Sigmoid colon (tissue), 7 donors: ENCODE measurements at regions of chr14 and their contacts with region 1.

Region 1: GRCh38 chr14:31357279-31357678 is 63.1 kb downstream of the HEATR5A start:
- DNase-seq: no peak
- H3K4me3 ChIP-seq: no peak overlapping the region
- H3K27ac ChIP-seq: no peak overlapping the region
- H3K4me1 ChIP-seq: peaks cover 0 to 6% (median 2%) of the 10 kb centered on the region in 4 donors
- H3K27me3 ChIP-seq: no peaks in the 10 kb centered on the region
- CTCF ChIP-seq: no peak
- EP300 ChIP-seq: no peak
- POLR2A ChIP-seq: no peak

Region 2: GRCh38 chr14:31127690-31128089 is 229.6 kb before region 1 on chr14:
- intact Hi-C with region 1: loop called (anchors 10 kb)
- DNase-seq: no peak
- H3K4me3 ChIP-seq: no peak overlapping the region
- H3K27ac ChIP-seq: no peak overlapping the region
- H3K4me1 ChIP-seq: no peaks in the 10 kb centered on the region
- H3K27me3 ChIP-seq: no peaks in the 10 kb centered on the region
- CTCF ChIP-seq: no peak
- EP300 ChIP-seq: no peak
- POLR2A ChIP-seq: no peak

Region 3: DNA sequence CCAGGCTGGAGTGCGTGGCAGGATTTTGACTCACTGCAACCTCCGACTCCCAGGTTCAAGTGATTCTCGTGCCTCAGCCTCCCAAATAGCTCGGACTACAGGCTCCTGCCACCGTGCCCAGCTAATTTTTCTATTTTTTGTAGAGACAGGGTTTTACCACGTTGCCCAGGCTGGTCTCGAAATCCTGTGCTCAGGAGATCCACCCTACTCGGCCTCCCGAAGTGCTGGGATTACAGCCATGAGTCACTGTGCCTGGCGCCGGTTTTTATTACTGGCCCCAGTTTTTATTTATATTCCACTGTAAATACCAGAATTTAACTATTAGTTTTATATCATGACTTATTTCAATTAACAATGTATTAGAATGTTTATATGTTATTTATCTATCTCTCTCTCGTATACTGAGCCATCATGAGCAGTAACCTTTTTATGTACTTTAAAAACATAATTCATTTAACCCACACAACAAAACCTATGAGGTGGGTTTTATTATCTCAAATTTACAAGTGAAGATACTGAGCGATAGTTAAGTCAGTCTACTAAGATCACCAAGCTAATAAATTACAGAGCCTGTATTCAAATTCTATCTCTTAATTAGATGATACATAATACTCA is 197.5 kb before region 1 on chr14:
- intact Hi-C with region 1: loop called (anchors 10 kb)
- DNase-seq: peak; percentile 74
- H3K4me3 ChIP-seq: no peak overlapping the region
- H3K27ac ChIP-seq: peak overlapping the region; percentile 50 to 78 (median 68)
- H3K4me1 ChIP-seq: peaks cover 0 to 39% (median 36%) of the 10 kb centered on the region in 4 donors
- H3K27me3 ChIP-seq: no peaks in the 10 kb centered on the region
- CTCF ChIP-seq: no peak
- EP300 ChIP-seq: peak in 1 of 4 donors; percentile 6
- POLR2A ChIP-seq: no peak

Region 4: DNA sequence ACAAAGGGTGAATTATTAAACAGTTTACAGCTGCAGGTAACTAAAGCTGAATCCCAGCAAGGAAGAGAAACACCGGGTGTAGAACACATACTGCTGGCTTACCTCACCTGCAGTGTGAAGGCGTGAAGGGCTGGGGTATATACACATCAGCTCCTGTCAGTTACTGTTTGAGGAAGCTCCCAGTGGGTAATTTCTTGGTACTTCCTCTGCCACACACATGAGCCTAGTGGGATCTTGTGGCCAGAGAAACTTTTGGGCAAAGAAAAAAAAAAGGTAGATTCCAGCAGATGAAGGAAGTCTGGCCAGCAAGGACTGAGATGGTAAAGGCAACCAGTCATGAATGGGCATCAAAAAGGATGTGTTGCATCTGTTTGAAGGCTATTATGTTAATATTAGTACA is 144.6 kb after region 1 on chr14:
- intact Hi-C with region 1: no loop called
- DNase-seq: no peak
- H3K4me3 ChIP-seq: no peak overlapping the region
- H3K27ac ChIP-seq: no peak overlapping the region
- H3K4me1 ChIP-seq: peaks cover 0 to 24% (median 18%) of the 10 kb centered on the region in 4 donors
- H3K27me3 ChIP-seq: no peaks in the 10 kb centered on the region
- CTCF ChIP-seq: no peak
- EP300 ChIP-seq: no peak
- POLR2A ChIP-seq: no peak

Region 5: DNA sequence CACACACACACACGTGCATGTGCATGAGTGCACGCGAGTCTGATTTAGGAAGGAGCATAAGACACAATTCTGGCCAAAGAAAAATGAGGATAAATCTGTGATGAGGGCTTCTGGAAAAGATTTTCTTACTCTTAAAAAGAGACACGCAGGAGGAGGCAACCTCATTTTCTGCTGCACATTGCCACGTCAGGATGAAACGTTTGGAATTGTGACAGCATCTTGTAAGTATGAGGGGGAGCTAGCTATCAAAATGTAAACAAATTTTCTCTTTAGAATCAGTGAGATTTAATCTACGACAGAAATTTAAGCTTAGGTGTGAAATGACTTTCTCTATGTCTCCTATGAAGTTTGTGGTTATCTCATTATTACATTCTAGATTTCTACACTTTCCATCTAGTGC is 172.9 kb after region 1 on chr14:
- intact Hi-C with region 1: no loop called
- DNase-seq: no peak
- H3K4me3 ChIP-seq: no peak overlapping the region
- H3K27ac ChIP-seq: no peak overlapping the region
- H3K4me1 ChIP-seq: no peaks in the 10 kb centered on the region
- H3K27me3 ChIP-seq: no peaks in the 10 kb centered on the region
- CTCF ChIP-seq: no peak
- EP300 ChIP-seq: no peak
- POLR2A ChIP-seq: no peak